ENCODE measurements at regions of chr11 and their contacts with region 1.

Region 1: GRCh38 chr11:118277306-118277705 is 13.2 kb upstream of the MPZL2 start:
- DNase-seq: peak; percentile 34
- CTCF ChIP-seq: no peak

Region 2: DNA sequence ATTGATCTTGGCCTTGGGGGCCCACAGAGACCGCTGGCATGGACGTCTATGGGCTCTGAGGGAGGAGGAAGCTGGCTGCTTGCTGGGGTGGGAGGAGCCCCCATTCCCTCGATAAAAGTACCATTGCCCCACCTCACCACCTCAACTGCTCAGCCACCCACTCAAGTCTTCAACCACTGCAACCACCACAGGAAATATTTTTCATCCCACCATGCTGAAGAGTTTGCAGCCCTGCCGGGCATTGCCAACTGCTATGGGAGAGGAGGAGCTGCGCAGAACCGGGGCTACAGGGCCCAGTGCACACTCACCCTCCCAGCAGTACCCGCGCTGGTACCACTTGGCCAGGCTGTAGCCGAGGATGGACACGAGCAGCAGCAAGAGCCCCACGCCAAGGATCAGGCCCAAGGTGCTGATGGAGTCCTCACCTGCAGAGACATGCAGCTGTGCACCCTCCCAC is 261.9 kb before region 1 on chr11:
- CTCF ChIA-PET with region 1: no interaction called
- POLR2A ChIA-PET with region 1: no interaction called
- DNase-seq: no peak
- CTCF ChIP-seq: no peak

Region 3: GRCh38 chr11:118224511-118225188 is 52.7 kb before region 1 on chr11 and contains the start of gene JAML:
- CTCF ChIA-PET with region 1: no interaction called
- POLR2A ChIA-PET with region 1: no interaction called
- DNase-seq: peak; percentile 38
- CTCF ChIP-seq: no peak

Region 4: DNA sequence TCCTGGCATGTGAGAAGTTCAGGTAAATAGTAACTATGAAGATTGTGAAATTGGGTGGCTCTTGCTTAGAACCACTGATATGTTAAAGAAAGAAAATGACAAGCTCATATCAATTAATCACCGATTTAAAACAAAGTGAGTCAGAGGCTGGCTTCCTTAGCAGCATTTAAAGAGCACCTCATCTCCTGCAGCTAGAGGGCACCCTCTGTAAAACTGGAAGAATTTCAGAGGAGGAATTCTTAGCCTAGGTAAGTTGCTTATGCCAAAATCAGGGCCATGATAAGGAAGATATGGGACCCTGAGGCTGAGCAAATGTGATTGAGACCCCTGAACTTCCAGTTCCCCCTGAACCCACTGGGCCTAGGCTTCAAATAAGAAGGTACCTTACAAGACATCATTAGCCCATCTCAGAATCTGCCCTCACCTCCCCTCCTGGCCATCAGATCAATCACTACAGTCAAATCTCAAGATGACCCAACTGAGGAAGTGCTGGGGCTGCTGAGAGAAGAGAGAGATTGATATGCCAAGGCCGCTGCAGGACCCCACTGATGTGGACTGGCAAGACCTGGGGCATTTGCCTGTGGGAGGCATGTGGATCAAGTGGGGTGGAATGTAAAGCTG is 18.6 kb after region 1 on chr11:
- CTCF ChIA-PET with region 1: interaction called, 18 read pairs
- POLR2A ChIA-PET with region 1: no interaction called
- DNase-seq: no peak
- CTCF ChIP-seq: peak; percentile 77